Left ventricle myocardium inferior (tissue), 1 donor: ENCODE measurements at regions of chr2 and their contacts with region 1.

Region 1: DNA sequence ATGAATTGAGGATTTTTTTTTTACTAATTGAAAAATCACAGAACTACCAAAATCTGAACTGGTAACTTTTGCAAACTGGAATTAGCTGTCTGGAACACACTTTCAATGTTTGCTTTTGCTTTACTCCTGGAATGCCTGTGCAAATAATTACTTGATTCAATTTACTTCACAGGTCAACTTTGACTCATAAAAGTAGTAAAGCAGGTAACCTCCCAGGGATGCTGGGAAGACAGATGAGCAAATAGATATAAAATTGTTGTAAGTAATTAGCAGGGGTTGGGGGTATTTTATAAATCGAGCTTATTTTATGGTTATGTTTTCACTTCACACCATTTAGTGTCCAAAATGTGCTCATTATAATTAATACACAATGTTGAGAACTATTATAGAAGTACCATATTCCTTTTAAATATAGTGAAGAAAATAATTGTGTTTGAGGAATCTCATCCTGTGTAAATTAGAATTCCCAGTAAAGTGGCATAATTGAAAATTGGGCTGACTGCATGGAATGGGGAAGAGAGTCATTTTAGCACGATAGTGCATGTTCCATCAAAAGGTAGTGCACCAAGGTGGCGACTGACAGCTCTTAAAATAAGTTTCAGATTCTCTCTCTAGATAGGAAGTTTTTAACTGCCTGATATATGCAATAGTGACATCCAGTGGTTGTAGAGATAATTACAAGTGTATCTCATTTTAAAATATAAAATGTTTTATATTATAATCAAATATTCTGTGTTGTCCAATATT is 398.1 kb upstream of the HNRNPA3 start:
- DNase-seq: no peak
- H3K4me3 ChIP-seq: no peak overlapping the region
- H3K27ac ChIP-seq: no peak overlapping the region
- H3K4me1 ChIP-seq: no peaks in the 10 kb centered on the region
- H3K27me3 ChIP-seq: peaks cover 24% of the 10 kb centered on the region
- CTCF ChIP-seq: peak; percentile 73

Region 2: GRCh38 chr2:176130147-176130956 is 684.1 kb before region 1 on chr2:
- intact Hi-C with region 1: loop called (anchors 10 kb)
- DNase-seq: no peak
- H3K4me3 ChIP-seq: peak overlapping the region; percentile 62
- H3K27ac ChIP-seq: peak overlapping the region; percentile 77
- H3K4me1 ChIP-seq: peaks cover 25% of the 10 kb centered on the region
- H3K27me3 ChIP-seq: peaks cover 99% of the 10 kb centered on the region
- CTCF ChIP-seq: no peak